Activated CD8-positive, alpha-beta T cell treated with anti-CD3 and anti-CD28 coated beads, Interleukin-2, amount 10 ng/mL, durations not matched to agents 7 days and 5 days (primary cell): ENCODE measurements at regions of chr1 and their contacts with region 1.

Region 1: DNA sequence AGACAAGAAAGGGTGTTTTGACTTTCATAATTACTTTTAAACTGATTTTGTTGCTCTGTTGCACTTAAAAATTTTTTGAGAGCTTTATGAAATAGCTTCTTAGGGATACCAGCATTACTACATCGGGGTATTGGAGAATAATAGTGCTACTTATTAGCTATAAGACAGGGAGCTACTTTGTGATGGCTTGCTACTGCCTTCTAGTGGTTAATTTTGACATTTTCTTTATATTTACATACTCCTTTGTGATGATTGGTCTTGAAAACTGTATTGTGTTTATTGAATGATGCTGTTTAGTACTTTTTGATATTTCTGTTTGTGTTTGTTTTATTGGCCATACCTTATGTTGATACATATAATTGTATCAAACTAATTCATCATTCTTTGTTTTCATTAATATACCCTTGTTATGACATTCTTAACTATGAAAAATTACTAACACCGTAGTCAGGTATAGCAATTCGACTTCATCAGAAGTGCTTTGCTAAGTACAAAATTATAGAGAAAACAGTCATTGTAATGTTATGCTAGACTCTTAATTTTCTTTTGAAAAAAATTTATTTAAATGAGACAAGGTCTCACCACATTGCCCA is 85.5 kb downstream of the CLIC4 start:
- DNase-seq: no peak
- ATAC-seq: peak; percentile 51
- H3K4me3 Mint-ChIP-seq: no peak overlapping the region
- H3K27ac Mint-ChIP-seq: no peak overlapping the region
- H3K4me1 Mint-ChIP-seq: no peaks in the 10 kb centered on the region
- H3K27me3 Mint-ChIP-seq: peaks cover 7% of the 10 kb centered on the region

Region 2: GRCh38 chr1:24673336-24673735 is 157.4 kb before region 1 on chr1:
- CTCF ChIA-PET with region 1: interaction called, 11 read pairs
- POLR2A ChIA-PET with region 1: no interaction called
- DNase-seq: no peak
- ATAC-seq: no peak
- H3K4me3 Mint-ChIP-seq: no peak overlapping the region
- H3K27ac Mint-ChIP-seq: peak overlapping the region; percentile 6
- H3K4me1 Mint-ChIP-seq: peaks cover 7% of the 10 kb centered on the region
- H3K27me3 Mint-ChIP-seq: no peaks in the 10 kb centered on the region

Region 3: GRCh38 chr1:24694380-24694843 is 136.4 kb before region 1 on chr1:
- CTCF ChIA-PET with region 1: interaction called, 240 read pairs
- POLR2A ChIA-PET with region 1: no interaction called
- DNase-seq: no peak
- ATAC-seq: no peak
- H3K4me3 Mint-ChIP-seq: no peak overlapping the region
- H3K27ac Mint-ChIP-seq: no peak overlapping the region
- H3K4me1 Mint-ChIP-seq: peaks cover 12% of the 10 kb centered on the region
- H3K27me3 Mint-ChIP-seq: peaks cover 18% of the 10 kb centered on the region

Region 4: GRCh38 chr1:24847995-24848881 is 17.5 kb after region 1 on chr1:
- CTCF ChIA-PET with region 1: interaction called, 11 read pairs
- POLR2A ChIA-PET with region 1: no interaction called
- DNase-seq: peak; percentile 94
- ATAC-seq: peak; percentile 98
- H3K4me3 Mint-ChIP-seq: peak overlapping the region; percentile 56
- H3K27ac Mint-ChIP-seq: peak overlapping the region; percentile 70
- H3K4me1 Mint-ChIP-seq: peaks cover 24% of the 10 kb centered on the region
- H3K27me3 Mint-ChIP-seq: peaks cover 47% of the 10 kb centered on the region

Region 5: GRCh38 chr1:24955161-24955560 is 124.4 kb after region 1 on chr1:
- CTCF ChIA-PET with region 1: no interaction called
- POLR2A ChIA-PET with region 1: no interaction called
- DNase-seq: peak; percentile 90
- ATAC-seq: peak; percentile 81
- H3K4me3 Mint-ChIP-seq: peak overlapping the region; percentile 73
- H3K27ac Mint-ChIP-seq: peak overlapping the region; percentile 94
- H3K4me1 Mint-ChIP-seq: peaks cover 95% of the 10 kb centered on the region
- H3K27me3 Mint-ChIP-seq: no peaks in the 10 kb centered on the region